ENCODE measurements at regions of chr20 and their contacts with region 1.

Region 1: DNA sequence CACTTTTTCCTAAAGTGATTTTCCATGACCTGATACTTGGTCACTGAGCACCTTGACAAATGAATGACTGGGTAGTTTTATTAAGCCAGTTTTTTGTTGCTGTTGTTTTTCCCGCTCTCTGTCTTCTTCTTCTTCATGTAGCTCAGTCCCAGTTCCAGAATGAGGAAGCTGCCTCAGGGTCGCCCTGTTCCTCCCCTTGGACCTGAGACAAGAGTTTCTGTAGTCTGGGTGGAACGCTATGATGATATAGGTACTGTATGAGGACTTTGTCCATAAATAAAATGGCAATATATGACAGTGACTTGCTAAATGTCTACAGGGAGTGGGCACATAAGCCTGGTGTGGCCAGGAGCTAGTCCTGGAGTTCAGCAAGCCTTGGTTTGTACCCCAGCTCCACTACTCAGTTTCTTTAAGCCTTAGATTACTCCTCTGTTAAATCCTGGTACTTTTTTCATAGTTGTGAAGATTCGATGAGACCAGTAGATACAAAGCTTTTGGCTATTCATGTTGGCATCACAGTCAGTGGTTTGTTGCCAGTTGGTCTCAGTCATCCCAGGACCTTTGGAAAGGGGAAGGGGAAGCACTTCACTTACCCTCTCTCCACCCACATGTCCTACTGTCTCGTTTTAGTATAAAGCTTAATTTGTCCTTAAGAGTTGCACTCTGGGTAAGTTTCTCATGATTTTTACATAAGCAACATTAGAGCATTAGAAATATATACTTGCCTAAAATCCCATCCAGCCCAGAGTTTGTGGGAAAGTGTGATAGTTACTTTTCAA is 11.1 kb upstream of the ADIG start:
- DNase-seq: no peak
- ATAC-seq: no peak
- H3K4me3 ChIP-seq: no peak overlapping the region
- H3K27ac ChIP-seq: no peak overlapping the region
- H3K4me1 ChIP-seq: no peaks in the 10 kb centered on the region
- H3K27me3 ChIP-seq: no peaks in the 10 kb centered on the region
- CTCF ChIP-seq: no peak

Region 2: GRCh38 chr20:38275815-38276550 is 294.0 kb before region 1 on chr20:
- intact Hi-C with region 1: no loop called
- DNase-seq: no peak
- ATAC-seq: no peak
- H3K4me3 ChIP-seq: no peak overlapping the region
- H3K27ac ChIP-seq: no peak overlapping the region
- H3K4me1 ChIP-seq: peaks cover 9% of the 10 kb centered on the region
- H3K27me3 ChIP-seq: no peaks in the 10 kb centered on the region
- CTCF ChIP-seq: no peak

Region 3: DNA sequence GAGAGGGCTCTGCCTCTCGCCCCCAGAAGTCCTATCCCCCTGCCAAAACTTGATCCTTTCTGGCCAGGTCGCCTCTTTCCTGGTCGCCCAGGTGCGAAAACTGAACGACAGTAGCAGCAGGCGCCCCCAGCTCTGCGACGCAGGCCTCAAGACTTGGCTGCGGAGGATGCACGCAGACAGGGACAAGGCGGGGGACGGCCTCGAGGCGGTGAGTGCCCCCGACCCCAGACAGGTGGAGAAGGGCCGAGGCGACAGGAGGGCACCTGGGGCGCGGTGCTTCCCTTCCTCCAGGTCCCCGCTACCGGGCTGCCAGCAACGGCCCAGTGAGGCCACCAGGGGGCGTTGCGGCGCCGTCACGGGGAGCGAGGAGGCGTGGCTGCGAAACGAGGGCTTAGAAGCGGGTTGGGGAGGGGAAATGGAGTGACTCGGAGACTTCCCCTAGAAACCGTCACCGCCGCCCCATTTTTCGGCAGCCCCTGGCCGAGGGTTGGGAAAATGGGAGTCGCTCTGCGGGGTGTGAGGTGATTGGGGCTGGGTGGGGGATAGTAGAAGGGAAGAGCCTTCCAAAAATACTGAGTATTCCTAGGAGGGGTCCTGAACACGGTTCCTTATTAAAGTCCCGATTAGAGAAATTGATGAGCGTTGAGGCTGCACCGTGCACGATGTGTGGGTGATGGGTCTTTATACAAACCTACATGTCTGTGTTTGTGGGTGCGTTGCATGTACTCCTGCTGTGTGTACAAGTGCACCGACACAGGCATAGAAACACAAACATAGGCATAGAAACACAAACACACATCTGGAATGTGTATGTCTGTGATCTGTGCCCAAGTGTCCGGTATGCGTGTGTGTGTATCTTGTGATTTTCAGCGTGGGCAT is 76.3 kb after region 1 on chr20:
- intact Hi-C with region 1: no loop called
- DNase-seq: peak; percentile 69 to 85
- ATAC-seq: peak; percentile 87 to 99 (median 89)
- H3K4me3 ChIP-seq: peak overlapping the region; percentile 39
- H3K27ac ChIP-seq: no peak overlapping the region
- H3K4me1 ChIP-seq: peaks cover 3% of the 10 kb centered on the region
- H3K27me3 ChIP-seq: peaks cover 0 to 53% (median 5%) of the 10 kb centered on the region in 3 donors
- CTCF ChIP-seq: peak; percentile 89

Region 4: DNA sequence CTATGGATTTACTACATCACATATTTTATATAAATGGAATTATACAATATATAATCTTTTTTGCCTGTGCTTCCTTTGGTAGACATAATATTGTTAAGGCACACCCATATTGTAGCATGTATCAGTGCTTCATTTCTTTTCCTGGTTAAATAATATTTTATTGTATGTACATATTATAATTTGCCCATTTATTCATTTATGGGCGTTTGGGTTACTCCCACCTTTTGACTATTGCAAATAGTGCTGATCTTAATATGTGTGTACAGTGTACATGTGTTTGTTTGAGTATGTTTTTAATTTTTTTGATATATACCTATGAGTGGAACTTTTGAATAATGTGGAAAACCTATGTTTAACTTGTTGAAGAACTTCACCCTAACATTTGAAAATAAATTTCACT is 1196.4 kb after region 1 on chr20:
- intact Hi-C with region 1: loop called in 1 of 2 experiments (anchors 5 kb)
- DNase-seq: no peak
- ATAC-seq: no peak
- H3K4me3 ChIP-seq: no peak overlapping the region
- H3K27ac ChIP-seq: no peak overlapping the region
- H3K4me1 ChIP-seq: no peaks in the 10 kb centered on the region
- H3K27me3 ChIP-seq: no peaks in the 10 kb centered on the region
- CTCF ChIP-seq: no peak

Measured in psoas muscle (tissue), 8 donors.